ENCODE measurements at regions of chr3 and their contacts with region 1.

Region 1: DNA sequence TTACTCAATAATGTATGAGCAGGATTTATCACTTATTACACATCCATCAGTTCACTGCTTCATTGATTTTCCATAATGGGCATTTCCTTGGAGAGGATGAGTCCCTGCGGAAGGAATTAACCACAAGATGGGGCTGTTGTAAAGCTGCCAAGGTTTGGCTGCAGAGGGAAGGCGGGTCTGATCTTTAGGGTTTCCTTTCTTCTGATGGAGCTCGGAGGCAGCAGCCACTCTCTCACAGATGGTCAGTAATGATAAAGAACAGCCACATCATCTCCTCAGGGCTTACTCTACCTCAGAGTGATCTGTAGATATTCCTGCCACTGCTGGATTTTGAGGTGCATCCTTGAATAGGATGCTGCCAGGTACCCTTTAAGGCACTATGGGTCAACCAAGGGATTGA is 115.2 kb downstream of the USP13 start:
- DNase-seq: peak in 34 of 42 donors; percentile 14 to 80 (median 47)

Region 2: DNA sequence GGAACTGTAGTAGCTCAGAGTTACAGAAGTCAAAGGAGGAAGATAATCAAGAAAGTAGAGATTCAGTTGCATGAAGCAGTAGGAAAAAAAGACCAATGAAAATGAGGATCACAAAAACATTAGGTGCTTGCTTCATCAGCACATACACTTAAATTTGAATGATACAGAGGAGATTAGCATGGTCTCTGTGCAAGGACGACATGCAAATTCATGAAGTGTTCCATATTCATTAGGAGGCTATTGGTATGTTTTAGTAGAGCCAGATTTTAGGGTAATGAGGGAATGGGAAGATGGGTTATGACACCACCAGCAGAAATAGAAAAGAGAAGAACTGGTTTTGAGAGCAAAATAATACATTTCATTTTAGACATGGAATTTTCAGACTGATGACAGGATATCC is 812.9 kb after region 1 on chr3:
- intact Hi-C with region 1: loop called (anchors 10 kb)
- DNase-seq: no peak